ENCODE measurements at regions of chr18 and their contacts with region 1.

Region 1: GRCh38 chr18:66560092-66560491 is 43.8 kb downstream of the CDH19 start:
- DNase-seq: peak; percentile 49
- H3K4me3 ChIP-seq: no peak overlapping the region
- H3K27ac ChIP-seq: no peak overlapping the region
- H3K4me1 ChIP-seq: no peaks in the 10 kb centered on the region
- H3K27me3 ChIP-seq: no peaks in the 10 kb centered on the region
- CTCF ChIP-seq: peak; percentile 34 to 61

Region 2: DNA sequence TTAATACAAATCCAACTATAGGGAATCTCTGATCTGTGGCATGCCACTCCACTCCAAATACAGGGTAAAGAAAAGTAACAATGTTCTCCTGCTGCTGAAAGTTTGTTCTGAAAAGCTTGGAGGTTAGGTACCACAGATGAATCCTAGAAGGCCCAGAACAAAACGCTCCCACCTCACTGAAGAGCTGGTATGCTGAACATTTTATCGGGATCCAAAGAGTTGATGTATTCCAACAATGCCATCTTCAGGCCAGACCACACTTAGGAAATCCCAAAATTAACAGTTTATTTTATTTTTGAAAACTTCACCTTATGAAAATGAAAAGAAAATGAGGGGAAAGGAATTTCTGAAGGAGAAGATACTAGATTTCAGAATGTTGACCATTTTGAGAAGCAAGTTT is 188.9 kb after region 1 on chr18:
- CTCF ChIA-PET with region 1: interaction called, 5 read pairs
- dilution Hi-C with region 1: no loop called
- in situ Hi-C with region 1: no loop called
- intact Hi-C with region 1: loop called (anchors 1 kb)
- DNase-seq: no peak
- H3K4me3 ChIP-seq: no peak overlapping the region
- H3K27ac ChIP-seq: no peak overlapping the region
- H3K4me1 ChIP-seq: no peaks in the 10 kb centered on the region
- H3K27me3 ChIP-seq: no peaks in the 10 kb centered on the region
- CTCF ChIP-seq: peak; percentile 3 to 37

Region 3: DNA sequence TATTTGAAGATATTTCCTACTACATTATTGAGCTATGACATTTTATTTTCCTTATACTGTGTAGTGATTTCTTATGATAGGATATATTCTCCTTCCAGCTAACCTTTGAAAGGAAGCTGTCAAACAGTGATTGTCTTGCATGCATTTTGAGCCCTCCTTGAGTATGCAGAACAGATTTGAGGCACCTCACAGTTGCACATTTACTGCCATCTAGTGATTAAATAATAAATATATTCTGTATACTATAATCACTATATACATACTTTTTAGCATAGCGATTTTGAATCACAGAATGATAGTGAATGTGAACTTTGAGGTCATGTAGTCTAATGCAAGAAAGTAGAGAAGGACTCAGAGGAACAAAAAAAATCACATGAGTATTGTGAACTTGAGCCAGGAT is 312.2 kb after region 1 on chr18:
- CTCF ChIA-PET with region 1: interaction called, 5 read pairs
- dilution Hi-C with region 1: no loop called
- in situ Hi-C with region 1: no loop called
- intact Hi-C with region 1: loop called (anchors 2 kb)
- DNase-seq: peak; percentile 4
- H3K4me3 ChIP-seq: no peak overlapping the region
- H3K27ac ChIP-seq: no peak overlapping the region
- H3K4me1 ChIP-seq: peaks cover 3% of the 10 kb centered on the region
- H3K27me3 ChIP-seq: no peaks in the 10 kb centered on the region
- CTCF ChIP-seq: peak in 1 of 2 donors; percentile 44

Region 4: DNA sequence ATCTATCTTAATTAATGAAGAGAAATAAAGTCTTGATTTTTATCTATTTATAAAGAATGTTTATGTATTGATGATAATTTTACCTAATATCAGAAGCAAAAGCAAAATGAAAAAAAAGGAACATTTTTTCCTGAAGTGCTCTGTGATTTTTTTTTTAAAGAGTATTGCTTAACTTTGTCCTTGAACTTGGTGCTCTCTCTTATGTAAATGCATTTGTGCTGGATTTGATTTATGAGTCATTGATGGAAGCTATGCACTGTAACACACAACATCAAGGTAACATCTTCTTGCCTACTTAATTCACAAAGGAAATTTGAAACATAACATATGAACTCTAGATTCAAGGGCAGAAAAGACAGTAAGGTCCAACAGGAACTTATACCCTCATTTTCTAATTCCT is 356.7 kb after region 1 on chr18:
- CTCF ChIA-PET with region 1: no interaction called
- dilution Hi-C with region 1: no loop called
- in situ Hi-C with region 1: no loop called
- intact Hi-C with region 1: no loop called
- DNase-seq: no peak
- H3K4me3 ChIP-seq: no peak overlapping the region
- H3K27ac ChIP-seq: no peak overlapping the region
- H3K4me1 ChIP-seq: no peaks in the 10 kb centered on the region
- H3K27me3 ChIP-seq: no peaks in the 10 kb centered on the region
- CTCF ChIP-seq: no peak

Region 5: GRCh38 chr18:67199993-67200617 is 640.0 kb after region 1 on chr18:
- CTCF ChIA-PET with region 1: no interaction called
- dilution Hi-C with region 1: no loop called
- in situ Hi-C with region 1: no loop called
- intact Hi-C with region 1: loop called (anchors 5 kb)
- DNase-seq: peak; percentile 37
- H3K4me3 ChIP-seq: no peak overlapping the region
- H3K27ac ChIP-seq: no peak overlapping the region
- H3K4me1 ChIP-seq: no peaks in the 10 kb centered on the region
- H3K27me3 ChIP-seq: peaks cover 6% of the 10 kb centered on the region
- CTCF ChIP-seq: peak; percentile 60 to 72

Measured in mammary epithelial cell (primary cell).